ENCODE measurements at regions of chr7 and their contacts with region 1.

Region 1: DNA sequence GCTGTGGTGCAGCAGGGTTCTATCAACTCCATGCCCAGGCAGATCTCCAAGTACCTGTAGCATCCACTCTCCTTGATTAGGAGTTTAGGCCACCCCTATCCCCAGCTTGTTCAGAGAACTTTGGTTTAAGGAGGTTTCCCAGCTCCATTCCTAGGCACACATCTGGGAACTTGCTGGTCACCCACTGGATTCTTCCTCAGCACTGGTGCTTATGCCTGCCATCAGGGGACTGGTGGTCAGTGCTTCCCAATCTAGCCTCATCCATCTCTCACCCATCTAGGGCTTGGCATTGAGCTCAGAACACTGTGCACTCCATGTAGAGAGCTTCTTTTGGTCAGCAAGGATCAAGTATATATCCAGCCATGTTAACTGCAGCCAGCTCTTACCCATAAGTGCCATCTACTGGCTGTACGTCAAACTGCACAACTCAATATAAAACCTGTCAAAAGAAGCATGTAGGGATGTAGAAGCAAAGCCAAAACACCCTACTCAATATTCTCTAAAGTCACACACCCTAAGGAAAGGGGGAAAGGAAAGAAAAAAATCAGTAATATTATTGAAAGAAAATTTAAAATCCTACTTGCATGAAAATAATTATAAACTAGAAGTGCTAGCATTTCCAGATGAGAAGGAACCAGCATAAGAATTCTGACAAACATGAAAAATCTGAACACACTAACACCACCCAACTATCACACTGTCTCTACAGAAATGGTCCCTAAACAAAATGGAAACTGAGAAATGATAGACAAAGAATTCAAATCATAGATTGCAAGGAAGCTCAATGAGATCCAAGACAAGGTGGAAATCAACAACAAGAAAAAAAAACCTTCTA is 531.2 kb upstream of the STEAP1 start:
- DNase-seq: no peak
- H3K4me3 ChIP-seq: no peak overlapping the region
- H3K27ac ChIP-seq: no peak overlapping the region
- H3K27me3 ChIP-seq: no peaks in the 10 kb centered on the region
- CTCF ChIP-seq: peak; percentile 27 to 83 (median 68)

Region 2: DNA sequence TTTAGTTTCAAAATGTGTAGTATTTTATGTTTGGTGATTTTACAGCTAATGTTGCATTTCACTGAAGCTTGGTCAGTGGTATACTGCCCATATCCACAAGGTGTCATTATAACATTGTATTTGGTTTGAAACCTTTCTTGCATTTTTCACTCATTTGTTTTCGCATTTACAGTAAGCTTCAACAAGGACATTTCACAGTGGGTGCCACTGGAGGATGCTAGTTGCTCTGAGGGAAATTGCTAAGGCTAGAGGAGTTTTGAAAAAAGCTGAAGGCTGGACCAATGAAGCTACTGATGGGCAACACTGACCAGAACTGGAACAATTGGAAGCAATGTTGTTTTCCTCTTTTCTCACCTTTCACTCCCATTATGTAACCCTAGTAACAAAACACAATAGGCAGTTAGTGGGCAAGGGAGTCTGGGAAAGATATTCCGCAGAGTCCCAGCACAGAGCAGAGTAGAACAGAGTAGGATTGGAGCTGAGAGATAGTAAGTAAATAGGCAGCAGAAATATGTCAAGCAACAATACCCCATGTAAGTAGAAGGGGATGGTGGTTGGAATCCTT is 1379.6 kb before region 1 on chr7:
- intact Hi-C with region 1: loop called in 1 of 2 experiments (anchors 10 kb)
- DNase-seq: peak in 2 of 10 donors; percentile 19 to 40
- H3K4me3 ChIP-seq: peak overlapping the region in 6 of 59 donors; percentile 1 to 23 (median 16)
- H3K27ac ChIP-seq: no peak overlapping the region
- H3K27me3 ChIP-seq: no peaks in the 10 kb centered on the region
- CTCF ChIP-seq: peak; percentile 61 to 90 (median 78)

Region 3: GRCh38 chr7:88789480-88790064 is 833.5 kb before region 1 on chr7:
- intact Hi-C with region 1: loop called in 1 of 2 experiments (anchors 10 kb)
- DNase-seq: no peak
- H3K4me3 ChIP-seq: no peak overlapping the region
- H3K27ac ChIP-seq: no peak overlapping the region
- H3K27me3 ChIP-seq: no peaks in the 10 kb centered on the region
- CTCF ChIP-seq: peak; percentile 37 to 69 (median 55)

Region 4: GRCh38 chr7:89714131-89714530 is 91.1 kb after region 1 on chr7:
- intact Hi-C with region 1: no loop called
- DNase-seq: no peak
- H3K4me3 ChIP-seq: no peak overlapping the region
- H3K27ac ChIP-seq: no peak overlapping the region
- H3K27me3 ChIP-seq: no peaks in the 10 kb centered on the region
- CTCF ChIP-seq: no peak